ENCODE measurements at regions of chr12 and their contacts with region 1.

Region 1: GRCh38 chr12:87509237-87509820 is 519.9 kb downstream of the C12orf50 start:
- DNase-seq: no peak
- ATAC-seq: no peak
- H3K4me3 ChIP-seq: no peak overlapping the region
- H3K27ac ChIP-seq: no peak overlapping the region
- H3K4me1 ChIP-seq: no peaks in the 10 kb centered on the region
- H3K27me3 ChIP-seq: no peaks in the 10 kb centered on the region
- CTCF ChIP-seq: no peak

Region 2: DNA sequence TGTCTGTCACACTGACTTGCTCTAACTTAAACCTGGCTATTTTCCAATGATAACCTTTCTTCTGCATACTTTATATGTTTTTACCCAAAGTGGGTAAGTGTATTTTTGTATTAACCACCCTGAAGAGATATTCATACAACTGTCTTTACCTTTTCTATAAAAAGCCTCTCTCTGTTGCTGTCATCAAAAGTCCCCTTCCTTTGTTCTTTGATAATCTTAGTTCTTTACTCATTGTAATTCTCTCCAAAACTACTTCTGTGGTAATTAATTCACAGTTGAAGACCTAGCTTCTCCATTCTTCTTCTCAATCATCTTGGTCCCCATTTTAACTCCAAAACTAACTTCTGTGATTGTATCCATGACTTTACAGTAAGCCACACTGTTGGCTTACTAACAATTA is 773.5 kb before region 1 on chr12:
- CTCF ChIA-PET with region 1: no interaction called
- POLR2A ChIA-PET with region 1: no interaction called
- in situ Hi-C with region 1: no loop called
- intact Hi-C with region 1: loop called (anchors 10 kb)
- DNase-seq: no peak
- ATAC-seq: no peak
- H3K4me3 ChIP-seq: no peak overlapping the region
- H3K27ac ChIP-seq: no peak overlapping the region
- H3K4me1 ChIP-seq: no peaks in the 10 kb centered on the region
- H3K27me3 ChIP-seq: no peaks in the 10 kb centered on the region
- CTCF ChIP-seq: no peak

Region 3: GRCh38 chr12:87943762-87944161 is 434.4 kb after region 1 on chr12:
- CTCF ChIA-PET with region 1: no interaction called
- POLR2A ChIA-PET with region 1: interaction called, 11 read pairs
- in situ Hi-C with region 1: no loop called
- intact Hi-C with region 1: no loop called
- DNase-seq: no peak
- ATAC-seq: no peak
- H3K4me3 ChIP-seq: no peak overlapping the region
- H3K27ac ChIP-seq: no peak overlapping the region
- H3K4me1 ChIP-seq: no peaks in the 10 kb centered on the region
- H3K27me3 ChIP-seq: no peaks in the 10 kb centered on the region
- CTCF ChIP-seq: no peak

Region 4: GRCh38 chr12:88519802-88520435 is 1010.6 kb after region 1 on chr12:
- CTCF ChIA-PET with region 1: no interaction called
- POLR2A ChIA-PET with region 1: no interaction called
- in situ Hi-C with region 1: no loop called
- intact Hi-C with region 1: no loop called
- DNase-seq: no peak
- ATAC-seq: no peak
- H3K4me3 ChIP-seq: no peak overlapping the region
- H3K27ac ChIP-seq: no peak overlapping the region
- H3K4me1 ChIP-seq: no peaks in the 10 kb centered on the region
- H3K27me3 ChIP-seq: no peaks in the 10 kb centered on the region
- CTCF ChIP-seq: no peak